ENCODE measurements at regions of chr19 and their contacts with region 1.

Region 1: GRCh38 chr19:21698215-21698614 is 69.2 kb downstream of the ZNF100 start:
- DNase-seq: no peak
- ATAC-seq: peak; percentile 62; the same call in 1 of the 2 replicates
- H3K4me3 ChIP-seq: no peak overlapping the region
- H3K27ac ChIP-seq: no peak overlapping the region
- H3K4me1 ChIP-seq: no peaks in the 10 kb centered on the region; the same call in 1 of the 2 replicates
- H3K27me3 ChIP-seq: no peaks in the 10 kb centered on the region
- CTCF ChIP-seq: peak; percentile 66; the same call in 1 of the 2 replicates

Region 2: GRCh38 chr19:20726755-20727154 is 971.5 kb before region 1 on chr19:
- CTCF ChIA-PET with region 1: interaction called, 10 read pairs
- POLR2A ChIA-PET with region 1: no interaction called
- in situ Hi-C with region 1: no loop called
- intact Hi-C with region 1: no loop called
- DNase-seq: no peak
- ATAC-seq: no peak
- H3K4me3 ChIP-seq: no peak overlapping the region
- H3K27ac ChIP-seq: no peak overlapping the region
- H3K4me1 ChIP-seq: no peaks in the 10 kb centered on the region
- H3K27me3 ChIP-seq: no peaks in the 10 kb centered on the region
- CTCF ChIP-seq: no peak

Region 3: DNA sequence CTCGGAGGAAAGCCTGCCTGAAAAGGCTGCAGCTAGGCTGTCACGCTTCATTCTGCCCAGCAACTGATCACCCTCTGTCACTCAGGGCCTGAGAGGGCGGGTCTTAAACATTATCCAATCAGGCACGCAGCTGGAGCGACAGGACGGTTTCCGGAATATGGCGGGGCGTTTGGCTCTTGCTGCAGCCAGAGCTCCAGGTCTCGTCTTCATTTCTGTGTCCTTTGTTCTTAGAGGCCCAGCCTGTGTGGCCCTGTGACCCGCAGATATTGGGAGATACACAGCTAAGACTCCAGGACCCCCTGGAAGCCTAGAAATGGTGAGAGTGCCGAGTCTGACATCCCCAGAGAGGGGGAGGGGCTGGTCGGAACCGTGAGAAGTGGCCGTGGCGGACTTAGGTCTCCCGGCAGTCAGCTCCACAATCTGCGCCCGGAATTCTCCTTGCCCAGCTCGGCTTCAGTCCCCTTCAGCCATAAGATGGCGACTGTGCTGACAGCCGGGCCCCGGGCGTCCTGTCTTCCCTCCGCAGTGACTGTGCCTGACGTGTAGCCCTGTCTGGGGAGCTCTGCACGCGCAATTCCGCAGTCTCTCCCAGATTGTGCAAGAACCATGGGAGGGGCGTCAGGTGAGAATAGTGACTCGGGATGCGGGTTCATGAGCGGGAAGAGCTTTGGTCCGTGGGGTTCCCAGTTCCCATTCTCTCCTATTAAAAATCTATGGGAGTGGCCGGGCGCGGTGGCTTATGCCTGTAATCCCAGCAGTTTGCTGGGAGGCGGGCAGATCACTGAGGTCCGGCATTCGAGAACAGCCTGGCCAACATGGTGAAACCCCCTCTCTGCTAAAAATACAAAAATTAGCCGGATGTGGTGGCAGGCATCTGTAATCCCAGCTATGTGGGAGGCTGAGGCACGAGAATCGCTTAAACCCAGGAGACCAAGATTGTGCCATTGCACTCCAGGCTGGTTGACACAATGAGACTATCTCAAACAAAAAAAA is 192.5 kb before region 1 on chr19 and contains the start of gene ZNF429:
- CTCF ChIA-PET with region 1: no interaction called
- POLR2A ChIA-PET with region 1: no interaction called
- in situ Hi-C with region 1: no loop called
- intact Hi-C with region 1: loop called (anchors 10 kb)
- DNase-seq: peak; percentile 61
- ATAC-seq: peak; percentile 100
- H3K4me3 ChIP-seq: peak within 1 kb of the TSS; percentile 92 to 94
- H3K27ac ChIP-seq: peak within 1 kb of the TSS; percentile 85
- H3K4me1 ChIP-seq: no peaks in the 10 kb centered on the region; the same call in 1 of the 2 replicates
- H3K27me3 ChIP-seq: no peaks in the 10 kb centered on the region
- CTCF ChIP-seq: no peak
- total RNA-seq, gene ZNF429: 8.3 TPM

Region 4: GRCh38 chr19:21608571-21608970 is 89.6 kb before region 1 on chr19:
- CTCF ChIA-PET with region 1: no interaction called
- POLR2A ChIA-PET with region 1: no interaction called
- in situ Hi-C with region 1: no loop called
- intact Hi-C with region 1: no loop called
- DNase-seq: no peak
- ATAC-seq: no peak
- H3K4me3 ChIP-seq: no peak overlapping the region
- H3K27ac ChIP-seq: no peak overlapping the region
- H3K4me1 ChIP-seq: peaks cover 3% of the 10 kb centered on the region; the same call in 1 of the 2 replicates
- H3K27me3 ChIP-seq: no peaks in the 10 kb centered on the region
- CTCF ChIP-seq: no peak

Region 5: DNA sequence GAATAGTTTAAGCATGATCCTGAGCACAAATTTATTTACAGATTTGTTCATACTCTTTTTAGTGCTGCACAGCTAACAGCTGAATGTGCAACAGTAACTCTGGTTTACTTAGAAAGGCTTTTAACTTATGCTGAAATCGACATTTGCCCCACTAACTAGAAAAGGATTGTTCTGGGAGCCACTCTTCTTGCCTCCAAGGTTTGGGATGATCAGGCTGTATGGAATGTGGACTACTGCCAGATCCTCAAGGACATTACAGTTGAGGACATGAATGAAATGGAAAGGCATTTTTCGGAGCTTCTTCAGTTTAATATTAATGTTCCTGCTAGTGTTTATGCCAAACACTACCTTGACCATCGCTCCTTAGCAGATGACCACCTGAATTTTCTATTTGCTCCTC is 53.2 kb after region 1 on chr19:
- CTCF ChIA-PET with region 1: no interaction called
- POLR2A ChIA-PET with region 1: no interaction called
- in situ Hi-C with region 1: no loop called
- intact Hi-C with region 1: no loop called
- DNase-seq: no peak
- ATAC-seq: no peak
- H3K4me3 ChIP-seq: no peak overlapping the region
- H3K27ac ChIP-seq: no peak overlapping the region
- H3K4me1 ChIP-seq: no peaks in the 10 kb centered on the region
- H3K27me3 ChIP-seq: no peaks in the 10 kb centered on the region
- CTCF ChIP-seq: no peak

Region 6: GRCh38 chr19:21789466-21790080 is 91.4 kb after region 1 on chr19:
- CTCF ChIA-PET with region 1: no interaction called
- POLR2A ChIA-PET with region 1: no interaction called
- in situ Hi-C with region 1: no loop called
- intact Hi-C with region 1: no loop called
- DNase-seq: no peak
- ATAC-seq: no peak
- H3K4me3 ChIP-seq: no peak overlapping the region
- H3K27ac ChIP-seq: no peak overlapping the region
- H3K4me1 ChIP-seq: no peaks in the 10 kb centered on the region
- H3K27me3 ChIP-seq: no peaks in the 10 kb centered on the region
- CTCF ChIP-seq: no peak

Region 7: GRCh38 chr19:21921691-21922180 is 223.5 kb after region 1 on chr19:
- CTCF ChIA-PET with region 1: no interaction called
- POLR2A ChIA-PET with region 1: no interaction called
- in situ Hi-C with region 1: no loop called
- intact Hi-C with region 1: no loop called
- DNase-seq: no peak
- ATAC-seq: no peak
- H3K4me3 ChIP-seq: no peak overlapping the region
- H3K27ac ChIP-seq: no peak overlapping the region
- H3K4me1 ChIP-seq: no peaks in the 10 kb centered on the region
- H3K27me3 ChIP-seq: no peaks in the 10 kb centered on the region
- CTCF ChIP-seq: no peak